ENCODE measurements at regions of chr1 and their contacts with region 1.

Region 1: DNA sequence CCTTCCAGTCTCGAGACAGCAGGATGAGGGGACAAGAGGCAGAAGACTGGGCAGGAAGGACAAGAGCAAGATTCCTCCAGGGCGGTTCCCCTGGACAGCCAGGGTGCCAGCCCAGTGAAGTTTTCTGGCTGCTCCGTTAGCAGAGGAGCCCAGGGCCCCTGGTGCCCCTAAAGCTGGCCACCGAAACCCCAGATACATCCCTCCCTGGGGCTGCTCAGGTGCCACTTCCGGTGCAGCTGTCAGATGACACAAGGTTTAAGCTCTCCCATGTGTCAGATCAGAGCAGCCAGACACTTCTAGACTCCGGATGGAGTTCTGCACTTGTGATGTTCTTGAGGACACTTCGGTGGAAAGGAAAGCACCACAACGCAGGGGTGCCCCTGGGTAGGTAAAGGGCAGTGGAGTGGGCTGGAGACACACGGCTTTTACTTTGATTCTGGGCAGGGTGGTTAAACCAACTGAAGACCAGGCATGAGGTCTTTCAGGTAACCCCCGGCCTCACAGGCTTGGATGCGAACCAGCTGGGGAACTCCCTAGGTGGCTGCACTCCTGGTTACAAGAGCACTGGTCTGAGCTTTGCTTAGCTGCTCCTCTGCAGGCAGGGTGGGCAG is 85.7 kb downstream of the ITPKB start:
- DNase-seq: peak; percentile 40
- H3K4me3 Mint-ChIP-seq: peak overlapping the region; percentile 81
- H3K27ac Mint-ChIP-seq: peak overlapping the region; percentile 94
- H3K4me1 Mint-ChIP-seq: peaks cover 25% of the 10 kb centered on the region
- H3K27me3 Mint-ChIP-seq: no peaks in the 10 kb centered on the region

Region 2: GRCh38 chr1:226397011-226397926 is 256.1 kb before region 1 on chr1:
- intact Hi-C with region 1: no loop called
- DNase-seq: no peak
- H3K4me3 Mint-ChIP-seq: no peak overlapping the region
- H3K27ac Mint-ChIP-seq: peak overlapping the region; percentile 63
- H3K4me1 Mint-ChIP-seq: peaks cover 31% of the 10 kb centered on the region
- H3K27me3 Mint-ChIP-seq: no peaks in the 10 kb centered on the region

Region 3: GRCh38 chr1:226642876-226643576 is 10.4 kb before region 1 on chr1:
- intact Hi-C with region 1: loop called (anchors 1 kb)
- DNase-seq: peak; percentile 50
- H3K4me3 Mint-ChIP-seq: peak overlapping the region; percentile 63
- H3K27ac Mint-ChIP-seq: peak overlapping the region; percentile 87
- H3K4me1 Mint-ChIP-seq: peaks cover 38% of the 10 kb centered on the region
- H3K27me3 Mint-ChIP-seq: no peaks in the 10 kb centered on the region

Measured in activated T-helper 1 cell treated with anti-CD3 and anti-CD28 coated beads, Interleukin-12 subunit alpha, Interleukin-12 subunit beta, Interleukin-2, Interleukin-4 antibody, amounts not matched to agents 30 ng/mL and 10 ng/mL and 1 ng/mL, durations not matched to agents 14 hours and 24 hours and 36 hours (primary cell).